ENCODE measurements at regions of chr4 and their contacts with region 1.

Region 1: GRCh38 chr4:68375667-68376559 is 26.0 kb upstream of the YTHDC1 start:
- DNase-seq: no peak
- ATAC-seq: peak; percentile 56 to 62

Region 2: DNA sequence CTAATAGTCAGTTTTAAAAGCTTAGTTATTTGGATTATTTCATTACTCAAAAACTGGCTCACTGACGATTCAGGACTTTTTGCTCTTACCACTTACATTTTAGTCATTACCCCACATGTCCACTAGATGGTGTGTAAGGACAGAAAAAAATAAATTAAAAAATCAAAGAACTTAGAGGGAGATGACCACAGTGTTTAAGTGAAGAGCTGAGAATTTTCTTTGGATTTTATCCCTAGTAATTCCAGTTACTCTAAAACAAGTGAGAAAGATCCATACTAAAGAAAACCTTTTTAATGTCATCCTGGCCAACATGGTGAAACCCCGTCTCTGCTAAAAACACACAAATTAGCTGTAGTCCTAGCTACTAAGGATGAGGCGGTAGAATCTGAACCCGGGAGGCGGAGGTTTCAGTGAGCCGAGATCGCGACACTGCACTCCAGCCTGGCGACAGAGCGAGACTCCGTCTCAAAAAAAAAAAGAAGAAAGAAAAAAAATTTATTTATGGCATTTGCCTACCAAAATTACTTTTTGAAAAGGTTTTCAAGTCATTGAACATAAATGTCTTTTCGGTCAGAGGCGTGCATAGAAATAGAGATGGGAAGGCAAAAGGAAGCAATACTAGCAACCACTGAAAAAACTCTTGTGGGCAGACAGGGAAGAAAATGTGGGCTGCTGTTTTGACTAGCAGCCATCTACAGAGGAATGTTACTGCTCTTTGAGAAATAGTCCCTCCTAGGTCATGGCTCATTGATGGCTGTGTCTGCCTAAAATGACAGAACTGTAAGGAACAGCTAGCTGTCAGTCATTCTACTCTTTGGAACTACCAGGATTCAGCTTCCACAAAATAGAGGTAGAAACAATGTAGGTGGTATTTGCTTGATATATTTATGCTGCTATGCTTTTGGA is 103.8 kb before region 1 on chr4:
- intact Hi-C with region 1: loop called (anchors 2 to 5 kb)
- DNase-seq: no peak
- ATAC-seq: peak in 1 of 2 donors; percentile 56